ENCODE measurements at regions of chr13 and their contacts with region 1.

Region 1: DNA sequence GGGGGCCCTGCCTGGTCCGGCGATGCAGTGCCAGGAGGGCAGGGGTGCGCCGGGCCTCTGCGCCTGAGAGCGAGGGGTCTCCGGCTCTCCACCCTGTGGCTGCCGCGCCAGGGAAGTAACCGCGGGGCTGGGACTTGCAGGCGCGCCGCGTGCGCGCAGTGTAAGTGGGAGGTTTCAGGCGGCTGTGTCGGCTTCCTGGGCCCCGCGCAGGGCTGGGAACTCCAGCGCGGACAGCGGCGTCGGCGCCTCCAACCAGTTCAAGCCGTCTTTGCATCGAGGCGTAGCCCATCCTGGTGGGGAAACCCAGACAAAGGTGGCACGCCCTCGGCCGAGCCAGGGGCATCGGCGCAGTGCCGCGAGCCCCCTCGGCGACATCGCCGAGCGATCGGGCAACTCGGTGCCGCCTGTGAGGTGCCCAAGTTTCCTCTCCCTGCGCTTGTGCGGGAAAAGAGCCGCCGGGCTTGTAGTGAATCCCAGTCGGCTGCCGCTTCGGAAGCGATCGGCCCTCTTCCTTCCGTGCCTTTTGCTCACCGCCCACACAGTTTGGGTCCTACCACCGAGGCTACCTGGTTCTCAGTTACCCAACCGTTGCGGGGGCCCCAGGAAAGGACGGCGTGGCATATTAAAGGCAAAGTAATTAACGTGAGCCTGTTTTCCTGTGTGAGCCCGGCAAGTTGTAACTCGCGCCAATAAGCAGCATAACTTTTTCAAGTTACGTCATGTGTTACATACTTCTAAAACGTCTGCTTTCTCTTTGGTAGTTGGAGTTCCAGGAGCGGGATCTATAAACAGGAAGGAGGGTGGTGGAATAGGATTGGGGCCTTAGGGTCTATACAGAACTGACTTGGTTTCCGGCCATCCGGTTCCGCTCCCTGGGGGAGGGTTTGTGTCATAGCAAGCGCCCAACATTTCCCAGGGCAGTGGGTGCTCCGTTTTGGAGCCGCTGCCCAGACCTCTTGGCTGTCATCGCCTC is 1.2 kb downstream of the LRCH1 start:
- DNase-seq: peak; percentile 71 to 88 (median 78)
- ATAC-seq: peak; percentile 42 to 75 (median 69)
- H3K4me3 ChIP-seq: peak overlapping the region; percentile 75 to 100 (median 90)
- H3K27ac ChIP-seq: peak overlapping the region; percentile 85 to 98 (median 94)
- H3K4me1 ChIP-seq: peaks cover 0 to 41% (median 28%) of the 10 kb centered on the region in 12 donors
- H3K27me3 ChIP-seq: no peaks in the 10 kb centered on the region
- CTCF ChIP-seq: peak in 8 of 12 donors; percentile 10 to 38 (median 22)
- POLR2A ChIP-seq: no peak

Region 2: GRCh38 chr13:46010148-46010547 is 544.0 kb before region 1 on chr13:
- intact Hi-C with region 1: no loop called
- DNase-seq: no peak
- ATAC-seq: no peak
- H3K4me3 ChIP-seq: no peak overlapping the region
- H3K27ac ChIP-seq: no peak overlapping the region
- H3K4me1 ChIP-seq: no peaks in the 10 kb centered on the region
- H3K27me3 ChIP-seq: no peaks in the 10 kb centered on the region
- CTCF ChIP-seq: peak in 2 of 12 donors; percentile 17 to 18
- POLR2A ChIP-seq: no peak

Region 3: GRCh38 chr13:46359750-46360149 is 194.4 kb before region 1 on chr13:
- intact Hi-C with region 1: no loop called
- DNase-seq: no peak
- ATAC-seq: peak in 3 of 4 donors; percentile 57 to 77 (median 70)
- H3K4me3 ChIP-seq: no peak overlapping the region
- H3K27ac ChIP-seq: peak overlapping the region in 5 of 12 donors; percentile 29 to 65 (median 41)
- H3K4me1 ChIP-seq: peaks cover 0 to 13% (median 0%) of the 10 kb centered on the region in 12 donors
- H3K27me3 ChIP-seq: peaks cover 0 to 6% (median 0%) of the 10 kb centered on the region in 9 donors
- CTCF ChIP-seq: no peak
- POLR2A ChIP-seq: no peak

Region 4: DNA sequence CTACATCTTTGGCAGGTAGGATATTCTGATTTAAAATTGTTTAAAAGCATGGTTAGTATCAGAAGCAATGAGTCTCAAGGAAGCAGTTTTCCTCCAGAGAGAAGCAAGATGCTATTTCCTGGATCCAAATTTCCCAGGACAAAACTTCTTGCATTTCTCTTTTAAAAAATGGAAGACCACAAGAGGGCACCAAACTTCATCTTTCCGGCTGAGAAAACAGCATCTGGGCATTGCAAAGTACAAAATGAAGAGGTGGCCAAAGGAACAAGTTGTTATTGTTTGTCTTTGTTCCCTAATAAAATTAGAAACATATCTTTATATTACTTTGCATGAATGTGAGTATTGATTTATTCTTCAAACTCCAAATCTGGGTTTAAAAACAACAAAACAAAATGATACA is 61.2 kb before region 1 on chr13:
- intact Hi-C with region 1: loop called in 9 of 10 experiments (anchors 2 to 10 kb)
- DNase-seq: peak in 1 of 5 donors; percentile 12
- ATAC-seq: peak in 2 of 4 donors; percentile 45 to 59
- H3K4me3 ChIP-seq: no peak overlapping the region
- H3K27ac ChIP-seq: no peak overlapping the region
- H3K4me1 ChIP-seq: peaks cover 0 to 12% (median 0%) of the 10 kb centered on the region in 12 donors
- H3K27me3 ChIP-seq: peaks cover 0 to 1% (median 0%) of the 10 kb centered on the region in 9 donors
- CTCF ChIP-seq: peak; percentile 46 to 82 (median 67)
- POLR2A ChIP-seq: no peak

Region 5: GRCh38 chr13:46587807-46588418 is 33.7 kb after region 1 on chr13:
- intact Hi-C with region 1: no loop called
- DNase-seq: no peak
- ATAC-seq: no peak
- H3K4me3 ChIP-seq: no peak overlapping the region
- H3K27ac ChIP-seq: no peak overlapping the region
- H3K4me1 ChIP-seq: peaks cover 0 to 72% (median 34%) of the 10 kb centered on the region in 12 donors
- H3K27me3 ChIP-seq: no peaks in the 10 kb centered on the region
- CTCF ChIP-seq: no peak
- POLR2A ChIP-seq: no peak

Region 6: GRCh38 chr13:46603165-46603603 is 49.0 kb after region 1 on chr13:
- intact Hi-C with region 1: loop called in 6 of 10 experiments (anchors 5 to 10 kb)
- DNase-seq: peak in 1 of 5 donors; percentile 46
- ATAC-seq: peak in 3 of 4 donors; percentile 20 to 37 (median 33)
- H3K4me3 ChIP-seq: no peak overlapping the region
- H3K27ac ChIP-seq: peak overlapping the region in 8 of 12 donors; percentile 16 to 68 (median 48)
- H3K4me1 ChIP-seq: peaks cover 14 to 97% (median 80%) of the 10 kb centered on the region in 12 donors
- H3K27me3 ChIP-seq: no peaks in the 10 kb centered on the region
- CTCF ChIP-seq: peak; percentile 19 to 56 (median 32)
- POLR2A ChIP-seq: no peak

Region 7: DNA sequence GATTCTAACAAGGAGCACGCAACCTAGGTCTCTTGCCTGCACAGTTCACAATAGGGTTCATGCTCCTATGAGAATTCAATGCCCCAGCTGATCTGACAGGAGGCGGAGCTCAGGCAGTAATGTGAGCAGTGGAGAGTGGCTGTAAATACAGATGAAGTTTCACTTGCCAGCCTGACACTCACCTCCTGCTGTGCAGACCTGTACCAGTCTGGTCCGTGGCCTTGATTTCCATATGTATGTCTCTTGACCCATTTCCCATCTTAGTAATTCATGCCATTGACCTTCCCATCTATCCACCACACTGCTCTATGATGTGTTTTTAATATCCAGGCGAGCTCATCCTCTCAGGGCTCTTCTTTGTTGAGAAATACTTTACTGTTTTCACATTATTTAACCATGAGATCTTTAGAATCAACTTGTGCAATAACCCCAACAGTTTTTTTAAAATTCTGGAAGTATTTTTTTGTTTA is 94.0 kb after region 1 on chr13:
- intact Hi-C with region 1: loop called in 1 of 10 experiments (anchors 10 kb)
- DNase-seq: no peak
- ATAC-seq: peak; percentile 51 to 81 (median 60)
- H3K4me3 ChIP-seq: no peak overlapping the region
- H3K27ac ChIP-seq: no peak overlapping the region
- H3K4me1 ChIP-seq: peaks cover 0 to 58% (median 36%) of the 10 kb centered on the region in 12 donors
- H3K27me3 ChIP-seq: no peaks in the 10 kb centered on the region
- CTCF ChIP-seq: no peak
- POLR2A ChIP-seq: no peak

Region 8: GRCh38 chr13:46679369-46680120 is 125.4 kb after region 1 on chr13:
- intact Hi-C with region 1: loop called in 6 of 10 experiments (anchors 5 to 10 kb)
- DNase-seq: peak in 1 of 5 donors; percentile 39
- ATAC-seq: peak; percentile 64 to 87 (median 72)
- H3K4me3 ChIP-seq: peak overlapping the region in 10 of 12 donors; percentile 8 to 52 (median 40)
- H3K27ac ChIP-seq: peak overlapping the region in 11 of 12 donors; percentile 15 to 87 (median 69)
- H3K4me1 ChIP-seq: peaks cover 3 to 65% (median 40%) of the 10 kb centered on the region in 12 donors
- H3K27me3 ChIP-seq: no peaks in the 10 kb centered on the region
- CTCF ChIP-seq: peak in 8 of 12 donors; percentile 13 to 46 (median 22)
- POLR2A ChIP-seq: no peak

Region 9: DNA sequence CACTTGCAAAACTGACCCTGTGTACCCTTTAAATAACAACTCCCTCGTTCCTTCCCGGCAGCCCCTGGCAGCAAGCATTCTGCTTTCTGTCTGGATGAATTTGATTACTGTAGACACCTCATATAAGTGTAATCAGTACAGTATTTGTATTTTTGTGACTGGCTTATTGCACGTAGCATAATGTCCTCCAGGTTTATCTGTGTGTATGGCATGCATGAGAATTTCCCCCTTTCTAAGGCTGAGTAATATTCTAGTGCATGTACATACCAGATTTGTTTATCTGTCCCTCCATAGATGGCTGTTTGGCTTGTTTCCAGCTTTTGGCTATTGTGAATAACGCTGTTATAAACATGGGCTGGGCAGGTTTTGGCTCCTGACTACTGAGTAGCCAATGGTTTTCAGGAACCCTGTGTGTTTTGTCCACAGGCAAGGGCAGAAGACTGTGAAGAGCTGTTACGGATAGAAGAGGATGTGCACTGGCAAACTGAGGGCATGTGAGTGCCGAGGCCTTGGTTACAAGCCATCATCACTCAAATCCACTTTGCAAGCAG is 144.8 kb after region 1 on chr13:
- intact Hi-C with region 1: loop called in 4 of 10 experiments (anchors 5 kb)
- DNase-seq: peak in 1 of 5 donors; percentile 21
- ATAC-seq: peak; percentile 62 to 71 (median 66)
- H3K4me3 ChIP-seq: no peak overlapping the region
- H3K27ac ChIP-seq: peak overlapping the region in 4 of 12 donors; percentile 4 to 52 (median 32)
- H3K4me1 ChIP-seq: peaks cover 0 to 22% (median 15%) of the 10 kb centered on the region in 12 donors
- H3K27me3 ChIP-seq: no peaks in the 10 kb centered on the region
- CTCF ChIP-seq: no peak
- POLR2A ChIP-seq: no peak

Measured in heart left ventricle (tissue), 16 donors.